ENCODE measurements at regions of chr13 and their contacts with region 1.

Region 1: GRCh38 chr13:101150998-101151397 is 265.3 kb downstream of the NALCN start:
- DNase-seq: no peak
- ATAC-seq: peak; percentile 42; the same call in 1 of the 2 replicates
- H3K4me3 ChIP-seq: no peak overlapping the region
- H3K27ac ChIP-seq: no peak overlapping the region
- H3K4me1 ChIP-seq: peaks cover 11% of the 10 kb centered on the region
- H3K27me3 ChIP-seq: no peaks in the 10 kb centered on the region
- CTCF ChIP-seq: no peak

Region 2: DNA sequence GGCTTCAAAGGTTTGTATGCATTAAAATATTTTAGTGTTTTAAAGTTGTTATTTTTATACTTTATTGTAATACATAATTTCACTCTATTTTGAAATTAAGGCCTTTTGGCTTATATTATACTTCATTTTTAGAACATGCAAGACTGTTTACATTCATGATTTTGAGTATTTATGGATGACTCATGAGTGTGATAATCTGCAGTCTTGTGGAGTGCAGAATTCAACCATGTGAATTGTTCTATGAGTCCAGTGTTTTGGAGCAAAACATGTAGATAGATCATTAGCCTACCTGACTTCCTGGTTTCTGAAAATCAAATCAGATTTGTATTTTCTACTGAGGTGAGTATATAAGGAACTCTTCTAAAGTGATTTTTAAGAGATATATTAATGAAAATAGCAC is 820.3 kb before region 1 on chr13:
- CTCF ChIA-PET with region 1: no interaction called
- POLR2A ChIA-PET with region 1: no interaction called
- intact Hi-C with region 1: no loop called
- DNase-seq: no peak
- ATAC-seq: peak; percentile 48
- H3K4me3 ChIP-seq: no peak overlapping the region
- H3K27ac ChIP-seq: no peak overlapping the region
- H3K4me1 ChIP-seq: no peaks in the 10 kb centered on the region
- H3K27me3 ChIP-seq: no peaks in the 10 kb centered on the region
- CTCF ChIP-seq: no peak

Region 3: GRCh38 chr13:101298517-101298916 is 147.5 kb after region 1 on chr13:
- CTCF ChIA-PET with region 1: no interaction called
- POLR2A ChIA-PET with region 1: no interaction called
- intact Hi-C with region 1: loop called (anchors 1 kb)
- DNase-seq: peak; percentile 38
- ATAC-seq: peak; percentile 64; the same call in 1 of the 2 replicates
- H3K4me3 ChIP-seq: no peak overlapping the region
- H3K27ac ChIP-seq: no peak overlapping the region
- H3K4me1 ChIP-seq: no peaks in the 10 kb centered on the region
- H3K27me3 ChIP-seq: no peaks in the 10 kb centered on the region
- CTCF ChIP-seq: peak; percentile 27